Ovary (tissue), 10 donors: ENCODE measurements at regions of chr5 and their contacts with region 1.

Region 1: DNA sequence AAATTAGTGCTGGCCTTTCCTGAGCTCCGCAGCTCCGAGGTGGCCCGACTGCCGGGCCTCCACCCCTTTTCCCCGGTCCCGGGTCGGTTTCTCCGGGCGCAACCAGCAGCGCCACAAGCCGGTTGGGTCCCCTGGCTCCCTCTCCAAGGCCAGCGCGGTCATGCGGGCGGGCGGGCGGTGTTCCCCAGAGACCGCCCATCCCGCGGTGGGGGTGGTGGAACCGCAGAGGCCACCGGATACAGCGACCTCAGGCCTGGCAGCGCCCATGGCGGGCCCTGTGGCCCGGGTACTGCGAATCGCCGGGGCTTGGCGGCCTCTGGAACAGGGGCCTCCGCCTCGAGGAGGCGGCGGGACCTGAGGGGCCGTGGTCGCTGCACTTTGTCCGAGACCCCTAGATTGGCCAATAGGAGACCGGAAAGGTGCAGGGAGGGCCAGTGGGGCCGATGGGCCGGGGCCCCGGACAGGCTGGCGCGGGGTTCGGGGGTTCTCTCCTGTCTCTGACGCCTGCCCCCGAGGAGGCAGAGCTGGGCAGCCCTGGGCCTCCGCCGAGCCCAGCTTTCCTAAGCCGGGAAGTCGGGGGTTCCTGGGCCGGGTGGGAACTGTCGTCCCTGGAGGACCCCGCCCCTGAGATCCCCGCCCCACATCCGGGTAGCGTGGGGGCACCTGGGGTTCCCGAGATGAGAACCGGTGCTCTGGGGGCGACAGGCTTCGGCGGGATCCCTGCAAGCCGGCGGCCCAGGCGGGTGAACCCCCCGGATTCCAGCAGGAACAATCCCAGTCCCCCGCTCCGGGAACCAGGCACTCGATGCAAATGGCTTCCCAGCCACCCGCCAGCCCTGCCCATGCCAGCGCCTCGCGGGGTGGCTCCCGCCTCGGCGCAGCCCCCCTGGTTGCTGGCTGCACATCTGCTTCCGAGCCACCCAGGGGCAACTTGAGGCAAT is 293.9 kb downstream of the ZSWIM6 start:
- DNase-seq: peak; percentile 57 to 78 (median 67)
- H3K4me3 ChIP-seq: peak overlapping the region; percentile 47
- H3K27ac ChIP-seq: no peak overlapping the region
- H3K4me1 ChIP-seq: peaks cover 9% of the 10 kb centered on the region
- H3K27me3 ChIP-seq: no peaks in the 10 kb centered on the region
- CTCF ChIP-seq: no peak
- EP300 ChIP-seq: no peak
- POLR2A ChIP-seq: no peak

Region 2: DNA sequence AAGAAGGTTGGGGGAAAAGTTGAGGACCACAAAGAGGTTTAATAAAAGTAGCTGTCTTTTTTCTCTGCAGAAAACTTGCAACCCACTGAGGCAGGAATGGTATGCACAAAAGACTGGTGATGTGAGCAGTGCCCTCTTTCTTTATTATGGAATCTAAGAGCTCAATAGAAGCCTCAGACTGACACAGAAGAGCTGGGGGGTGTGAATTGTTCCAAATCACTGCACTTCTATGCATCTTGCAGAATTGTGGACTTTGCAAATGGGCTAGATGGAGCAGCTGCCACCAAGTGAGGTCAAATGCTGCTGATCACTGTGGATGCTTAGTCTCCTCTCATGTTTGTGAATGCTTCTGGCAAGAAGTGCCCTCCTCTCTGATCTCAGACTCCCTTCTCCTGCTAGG is 66.8 kb before region 1 on chr5:
- intact Hi-C with region 1: no loop called
- DNase-seq: no peak
- H3K4me3 ChIP-seq: no peak overlapping the region
- H3K27ac ChIP-seq: no peak overlapping the region
- H3K4me1 ChIP-seq: no peaks in the 10 kb centered on the region
- H3K27me3 ChIP-seq: no peaks in the 10 kb centered on the region
- CTCF ChIP-seq: no peak
- EP300 ChIP-seq: no peak
- POLR2A ChIP-seq: no peak

Region 3: GRCh38 chr5:61732369-61732768 is 106.4 kb after region 1 on chr5:
- intact Hi-C with region 1: loop called in 1 of 4 experiments (anchors 10 kb)
- DNase-seq: peak in 4 of 5 donors; percentile 50 to 67 (median 56)
- H3K4me3 ChIP-seq: no peak overlapping the region
- H3K27ac ChIP-seq: peak overlapping the region in 1 of 2 donors; percentile 84
- H3K4me1 ChIP-seq: peaks cover 11% of the 10 kb centered on the region
- H3K27me3 ChIP-seq: no peaks in the 10 kb centered on the region
- CTCF ChIP-seq: no peak
- EP300 ChIP-seq: no peak
- POLR2A ChIP-seq: no peak